Activated CD8-positive, alpha-beta memory T cell treated with anti-CD3 and anti-CD28 coated beads, Interleukin-2, amount 10 ng/mL, durations not matched to agents 7 days and 5 days (primary cell): ENCODE measurements at regions of chr10 and their contacts with region 1.

Region 1: GRCh38 chr10:101441541-101442455 is 87.8 kb downstream of the BTRC start:
- DNase-seq: no peak
- ATAC-seq: peak; percentile 76
- H3K4me3 Mint-ChIP-seq: no peak overlapping the region
- H3K27ac Mint-ChIP-seq: no peak overlapping the region
- H3K4me1 Mint-ChIP-seq: peaks cover 3% of the 10 kb centered on the region
- H3K27me3 Mint-ChIP-seq: no peaks in the 10 kb centered on the region

Region 2: DNA sequence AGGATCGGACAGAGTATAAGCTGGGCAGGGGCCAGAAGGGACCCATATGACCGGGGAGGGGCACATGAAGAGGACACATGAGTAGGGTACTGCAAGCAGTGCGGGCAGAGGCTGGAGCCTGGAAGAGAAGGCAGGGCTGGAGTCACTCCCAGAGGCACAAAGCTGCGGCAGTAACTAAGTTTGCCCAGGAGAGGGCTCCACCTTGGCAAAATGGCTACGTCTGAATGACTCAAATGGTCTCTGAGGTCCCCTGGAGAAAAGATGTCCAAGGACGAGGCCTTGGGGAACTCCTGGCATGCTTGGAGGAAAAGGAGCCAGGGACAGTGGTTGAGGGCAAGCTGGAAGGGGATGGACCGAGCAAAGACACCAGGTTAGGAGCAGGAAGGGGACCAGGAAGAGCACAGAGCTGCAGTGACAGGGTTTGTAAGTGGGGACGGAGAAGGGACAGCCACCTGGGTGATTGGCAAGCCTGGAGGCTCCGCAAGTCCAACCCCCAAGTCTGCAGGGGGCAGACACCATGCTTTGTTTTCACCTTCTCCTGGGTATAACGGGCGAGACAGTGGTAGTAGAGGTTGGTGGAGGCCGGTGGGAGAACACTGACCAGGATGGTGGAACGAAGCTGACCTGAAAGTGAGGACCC is 169.4 kb before region 1 on chr10:
- CTCF ChIA-PET with region 1: interaction called, 18 read pairs
- DNase-seq: peak; percentile 74
- ATAC-seq: peak; percentile 86
- H3K4me3 Mint-ChIP-seq: no peak overlapping the region
- H3K27ac Mint-ChIP-seq: no peak overlapping the region
- H3K4me1 Mint-ChIP-seq: peaks cover 2% of the 10 kb centered on the region
- H3K27me3 Mint-ChIP-seq: peaks cover 14% of the 10 kb centered on the region

Region 3: GRCh38 chr10:101297901-101298486 is 143.8 kb before region 1 on chr10:
- CTCF ChIA-PET with region 1: interaction called, 17 read pairs
- DNase-seq: peak; percentile 78
- ATAC-seq: peak; percentile 86
- H3K4me3 Mint-ChIP-seq: no peak overlapping the region
- H3K27ac Mint-ChIP-seq: no peak overlapping the region
- H3K4me1 Mint-ChIP-seq: no peaks in the 10 kb centered on the region
- H3K27me3 Mint-ChIP-seq: peaks cover 66% of the 10 kb centered on the region

Region 4: GRCh38 chr10:101453791-101454718 is 12.3 kb after region 1 on chr10:
- CTCF ChIA-PET with region 1: interaction called, 16 read pairs
- DNase-seq: peak; percentile 48
- ATAC-seq: peak; percentile 69
- H3K4me3 Mint-ChIP-seq: no peak overlapping the region
- H3K27ac Mint-ChIP-seq: no peak overlapping the region
- H3K4me1 Mint-ChIP-seq: peaks cover 20% of the 10 kb centered on the region
- H3K27me3 Mint-ChIP-seq: peaks cover 31% of the 10 kb centered on the region

Region 5: GRCh38 chr10:101611096-101611905 is 169.5 kb after region 1 on chr10:
- CTCF ChIA-PET with region 1: no interaction called
- DNase-seq: peak; percentile 59
- ATAC-seq: peak; percentile 70
- H3K4me3 Mint-ChIP-seq: no peak overlapping the region
- H3K27ac Mint-ChIP-seq: peak overlapping the region; percentile 65
- H3K4me1 Mint-ChIP-seq: peaks cover 18% of the 10 kb centered on the region
- H3K27me3 Mint-ChIP-seq: no peaks in the 10 kb centered on the region